ENCODE measurements at regions of chr3 and their contacts with region 1.

Region 1: GRCh38 chr3:132709761-132710160 is 12.4 kb downstream of the NPHP3 start:
- H3K4me3 Mint-ChIP-seq: no peak overlapping the region
- H3K27ac Mint-ChIP-seq: no peak overlapping the region
- H3K4me1 Mint-ChIP-seq: no peaks in the 10 kb centered on the region
- H3K27me3 Mint-ChIP-seq: no peaks in the 10 kb centered on the region

Region 2: DNA sequence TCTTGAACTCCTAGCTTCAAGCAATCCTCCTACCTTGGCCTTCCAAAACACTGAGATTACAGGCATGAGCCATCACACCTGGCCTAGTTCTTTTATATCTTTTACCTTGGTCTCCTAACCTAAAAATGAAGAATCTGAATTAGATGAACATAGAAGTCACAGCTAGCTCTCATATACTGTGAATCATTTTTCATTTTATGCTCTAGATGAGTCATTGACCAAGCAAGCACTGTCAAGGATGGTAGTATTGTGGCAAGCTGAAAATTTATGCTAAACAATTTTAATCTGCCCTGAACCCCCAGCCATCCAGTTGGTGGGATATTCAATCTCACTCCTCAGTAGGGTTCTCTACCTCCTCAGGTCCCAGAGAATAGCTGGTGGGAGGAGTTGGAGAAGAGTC is 340.8 kb before region 1 on chr3:
- intact Hi-C with region 1: loop called (anchors 10 kb)
- H3K4me3 Mint-ChIP-seq: no peak overlapping the region
- H3K27ac Mint-ChIP-seq: no peak overlapping the region
- H3K4me1 Mint-ChIP-seq: no peaks in the 10 kb centered on the region
- H3K27me3 Mint-ChIP-seq: no peaks in the 10 kb centered on the region

Region 3: GRCh38 chr3:132870446-132870995 is 160.8 kb after region 1 on chr3:
- intact Hi-C with region 1: no loop called
- H3K4me3 Mint-ChIP-seq: no peak overlapping the region
- H3K27ac Mint-ChIP-seq: no peak overlapping the region
- H3K4me1 Mint-ChIP-seq: no peaks in the 10 kb centered on the region
- H3K27me3 Mint-ChIP-seq: no peaks in the 10 kb centered on the region